Cardiac septum (tissue), 1 donor: ENCODE measurements at regions of chr2 and their contacts with region 1.

Region 1: GRCh38 chr2:160109936-160110673 is 47.7 kb upstream of the PLA2R1 start:
- DNase-seq: no peak

Region 2: GRCh38 chr2:159982270-159982669 is 127.8 kb before region 1 on chr2:
- intact Hi-C with region 1: no loop called
- DNase-seq: no peak

Region 3: DNA sequence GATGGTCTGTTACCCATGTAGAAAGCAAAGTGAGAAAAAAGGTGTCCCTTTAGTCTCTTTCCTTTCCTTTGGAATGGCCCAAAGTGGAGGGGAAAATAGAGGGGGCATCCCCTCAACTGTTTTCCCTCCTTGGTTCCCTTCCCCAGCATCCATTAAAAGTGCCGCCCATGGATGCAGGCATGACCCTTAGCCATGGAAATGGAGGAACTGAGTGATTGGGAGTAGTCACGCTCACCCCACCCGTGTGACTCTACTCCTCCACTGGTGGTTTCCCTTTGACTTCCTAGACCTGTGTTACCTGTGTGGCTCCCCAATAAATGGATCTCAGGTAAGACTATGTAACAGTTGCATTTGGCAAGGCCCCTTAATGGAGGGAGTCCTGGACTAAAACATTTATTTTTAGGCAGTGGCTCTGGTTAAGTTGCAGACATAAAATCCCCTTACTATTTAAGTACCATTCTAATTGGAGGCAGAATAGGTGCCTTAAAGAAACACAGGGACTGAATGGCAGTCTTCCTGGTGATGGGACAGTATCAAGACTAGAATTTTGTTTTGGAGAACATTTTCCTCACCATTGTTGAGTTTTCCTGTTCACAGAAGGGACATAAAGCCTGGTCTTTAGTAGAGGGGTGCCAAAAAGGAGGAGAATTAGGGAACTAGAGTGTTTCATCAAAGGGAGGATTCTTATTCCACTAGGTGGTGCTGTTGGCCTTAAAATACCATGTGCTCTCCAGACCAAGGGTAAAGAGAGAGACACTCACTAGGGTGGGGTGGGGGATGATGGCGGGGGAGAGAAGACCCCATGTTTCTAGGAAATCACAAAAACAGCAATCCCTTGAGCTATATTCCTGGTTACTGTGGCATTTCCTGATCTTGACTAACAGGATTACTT is 22.0 kb before region 1 on chr2:
- intact Hi-C with region 1: no loop called
- DNase-seq: no peak

Region 4: DNA sequence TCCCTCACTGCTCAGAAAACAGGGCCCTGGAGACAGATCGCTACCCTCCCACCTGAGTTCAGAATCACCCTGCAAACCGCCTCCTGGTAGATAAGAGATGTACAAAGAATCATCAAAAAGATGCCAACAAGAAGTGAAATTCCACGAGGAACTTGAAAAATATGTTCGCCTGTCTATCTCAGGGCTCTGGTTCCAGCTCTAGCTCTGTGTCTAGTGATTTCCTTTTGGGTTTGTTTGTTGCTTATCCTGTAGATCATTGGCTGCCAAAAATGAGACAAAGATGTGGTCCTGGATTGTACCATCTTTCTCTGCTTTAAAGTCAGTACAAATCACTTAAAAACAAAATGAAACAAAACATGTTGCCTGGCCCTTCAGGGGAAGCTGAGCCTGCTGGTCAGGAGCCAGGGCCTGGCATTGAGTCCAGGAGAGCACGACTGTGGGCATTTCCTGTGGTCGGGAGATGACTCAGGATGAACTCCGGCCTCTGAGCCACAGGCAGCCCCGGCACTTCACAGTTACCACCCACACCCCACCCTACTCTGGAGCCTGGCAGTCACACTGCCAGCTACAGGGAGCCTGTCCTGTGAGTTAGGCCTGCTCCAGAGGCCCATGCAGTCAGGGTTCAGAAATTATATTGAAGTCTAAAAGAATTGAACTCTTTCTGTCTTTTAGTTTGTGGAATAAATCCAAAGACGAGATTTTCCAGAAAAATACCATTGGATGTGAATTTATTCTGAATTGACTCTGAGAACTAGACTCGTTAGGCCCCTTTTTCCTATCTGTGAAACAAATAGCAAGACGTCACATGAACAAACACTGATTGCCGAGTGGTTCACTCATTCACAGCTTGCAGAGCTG is 97.9 kb after region 1 on chr2:
- intact Hi-C with region 1: loop called (anchors 5 kb)
- DNase-seq: peak; percentile 81

Region 5: DNA sequence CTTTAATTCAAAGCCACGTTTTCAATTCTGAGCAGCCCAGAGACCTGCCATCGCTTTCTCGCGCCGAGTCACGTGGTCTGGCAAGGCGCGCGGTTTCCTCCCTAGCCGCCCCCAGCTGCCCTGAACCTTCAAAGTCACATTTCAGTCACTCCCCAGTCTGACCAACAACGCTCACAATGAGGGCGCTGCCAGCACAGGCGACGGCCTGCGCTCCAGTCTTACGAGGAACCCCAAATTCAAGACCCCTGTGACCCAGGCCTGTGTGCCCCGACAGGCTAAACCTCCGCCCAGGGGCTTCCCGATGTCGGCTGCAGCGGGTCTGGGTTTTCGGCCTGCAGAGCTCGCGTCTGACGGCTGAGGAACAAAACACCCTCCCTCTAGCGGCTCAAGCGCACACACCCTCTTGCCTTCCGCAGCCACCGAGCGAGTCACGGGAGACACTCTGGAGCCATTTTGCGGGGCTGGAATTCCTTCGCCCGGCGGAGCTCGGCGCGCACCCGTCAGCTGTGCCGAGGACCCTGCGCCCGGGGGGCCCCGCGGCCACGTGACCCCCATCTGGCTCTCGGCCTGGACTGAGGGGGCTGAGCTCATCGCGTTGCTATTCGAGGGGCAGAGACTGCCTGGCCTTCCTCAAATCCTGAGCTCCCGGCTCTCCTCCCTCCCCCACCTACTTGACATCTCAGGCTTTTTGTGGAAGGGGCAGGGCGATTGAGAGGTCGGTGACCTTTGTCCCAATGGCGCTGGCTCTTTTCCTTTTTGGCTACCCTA is 159.9 kb after region 1 on chr2:
- intact Hi-C with region 1: loop called (anchors 5 kb)
- DNase-seq: peak; percentile 95

Region 6: GRCh38 chr2:160281213-160281612 is 171.1 kb after region 1 on chr2:
- intact Hi-C with region 1: no loop called
- DNase-seq: no peak

Region 7: GRCh38 chr2:160970052-160970965 is 860.2 kb after region 1 on chr2:
- intact Hi-C with region 1: loop called (anchors 5 kb)
- DNase-seq: no peak

Region 8: DNA sequence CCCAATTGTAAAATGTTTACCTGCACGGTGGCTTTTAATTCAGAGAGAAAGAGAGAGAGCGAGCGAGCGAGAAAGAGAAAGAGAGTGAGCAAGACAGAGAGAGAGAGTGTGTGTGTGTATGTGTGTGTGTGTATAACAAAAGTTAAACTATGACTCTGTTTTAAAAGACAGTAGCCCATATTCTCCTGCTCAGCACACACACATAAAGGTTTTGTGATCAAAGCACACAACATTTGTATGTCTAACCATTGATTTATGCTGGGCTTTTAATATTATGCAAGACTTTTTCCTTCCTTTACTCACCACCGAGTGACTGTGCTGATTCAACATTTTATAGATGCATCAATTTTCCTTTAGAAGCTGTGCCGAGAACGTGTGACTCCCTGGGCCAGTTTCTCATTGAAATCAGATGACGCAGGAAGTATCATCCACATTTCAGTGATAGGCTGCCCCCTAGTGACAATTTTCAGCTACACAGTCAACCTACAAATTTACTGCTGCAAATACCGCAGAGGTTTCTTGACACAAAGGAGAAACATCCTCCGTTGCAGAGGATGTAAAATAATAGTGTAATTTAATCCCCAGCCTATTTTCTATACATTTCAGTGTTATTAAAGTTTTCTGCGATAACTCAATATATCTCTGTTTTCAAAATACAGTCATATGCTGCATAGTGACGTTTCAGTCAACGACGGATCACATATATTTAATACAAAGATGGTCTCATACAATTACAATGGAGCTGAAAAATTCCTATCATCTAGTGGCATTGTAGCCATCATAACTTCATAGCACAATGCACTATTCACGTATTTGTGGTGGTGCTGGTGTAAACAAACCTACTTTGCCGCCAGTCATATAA is 884.3 kb after region 1 on chr2:
- intact Hi-C with region 1: loop called (anchors 2 kb)
- DNase-seq: no peak

Region 9: DNA sequence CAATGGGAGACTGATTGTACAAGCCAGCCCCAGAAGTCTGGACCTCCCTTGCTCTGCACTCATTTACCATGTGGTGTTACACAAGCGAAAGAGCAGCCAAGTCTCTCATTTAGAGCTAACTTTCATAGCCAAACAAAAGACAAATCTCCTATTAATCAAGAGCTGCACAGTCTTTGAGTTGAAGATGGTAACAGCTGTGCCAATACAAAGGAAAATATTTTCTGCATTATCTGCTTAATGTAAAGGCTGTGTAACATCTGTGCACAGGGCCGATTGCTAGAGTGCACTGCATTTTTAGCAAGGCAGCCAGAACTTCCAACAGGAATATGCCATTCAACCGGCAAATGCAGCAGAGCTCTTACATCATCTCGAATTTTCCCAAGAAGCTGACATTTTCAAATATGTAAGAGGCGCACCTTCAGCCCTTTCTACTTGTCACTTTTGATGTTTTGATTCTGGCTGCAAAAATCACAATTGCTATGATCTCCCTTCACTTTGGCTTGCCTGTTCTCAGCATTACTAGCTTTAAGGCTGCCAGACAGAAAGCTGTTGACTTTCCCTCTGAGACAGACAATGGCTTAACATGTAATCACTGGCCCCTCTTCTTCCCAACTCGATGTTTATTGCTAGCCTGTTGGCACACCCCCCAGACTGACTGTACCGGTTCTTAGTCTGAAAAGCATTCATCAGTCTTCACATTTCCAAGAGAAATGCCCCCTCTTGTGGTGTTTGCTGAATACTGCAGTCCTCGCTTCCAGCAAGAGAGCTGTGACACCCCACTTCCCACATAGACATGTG is 953.3 kb after region 1 on chr2:
- intact Hi-C with region 1: loop called (anchors 5 kb)
- DNase-seq: no peak